ENCODE measurements at regions of chr7 and their contacts with region 1.

Region 1: DNA sequence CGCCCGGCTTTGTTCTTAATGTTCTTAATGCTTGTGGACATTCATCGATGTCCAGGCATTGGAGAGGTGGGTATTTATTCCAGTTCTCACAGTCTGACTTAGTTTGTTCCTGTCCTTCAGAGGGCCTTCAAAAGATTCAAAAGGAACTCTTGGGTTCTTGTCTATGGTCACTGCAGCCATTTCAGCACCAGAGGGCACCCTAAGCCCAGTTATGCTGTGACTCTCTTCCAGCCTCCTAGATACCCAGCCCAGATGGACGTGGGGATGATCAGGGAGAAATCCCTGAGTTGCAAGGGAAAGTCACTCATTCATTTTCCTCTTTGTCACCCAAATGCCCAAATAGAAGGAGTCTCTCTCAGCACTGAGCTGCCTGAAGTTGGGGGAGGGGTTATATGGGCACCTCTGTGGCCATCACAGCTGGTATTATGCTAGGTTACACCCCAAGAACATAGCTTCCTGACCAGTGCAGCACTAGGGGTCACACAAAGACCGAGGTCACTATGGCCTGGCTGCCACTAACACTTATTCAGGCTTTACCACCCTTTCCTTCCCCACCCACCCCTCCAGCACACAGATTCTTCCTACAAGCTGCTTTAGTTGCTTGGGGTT is 26.5 kb upstream of the CCDC126 start:
- DNase-seq: peak; percentile 72 to 78
- H3K4me3 ChIP-seq: no peak overlapping the region
- H3K27ac ChIP-seq: no peak overlapping the region
- H3K4me1 ChIP-seq: no peaks in the 10 kb centered on the region
- H3K27me3 ChIP-seq: no peaks in the 10 kb centered on the region
- CTCF ChIP-seq: peak in 5 of 6 experiments; percentile 60 to 91 (median 88)
- POLR2A ChIP-seq: no peak

Region 2: DNA sequence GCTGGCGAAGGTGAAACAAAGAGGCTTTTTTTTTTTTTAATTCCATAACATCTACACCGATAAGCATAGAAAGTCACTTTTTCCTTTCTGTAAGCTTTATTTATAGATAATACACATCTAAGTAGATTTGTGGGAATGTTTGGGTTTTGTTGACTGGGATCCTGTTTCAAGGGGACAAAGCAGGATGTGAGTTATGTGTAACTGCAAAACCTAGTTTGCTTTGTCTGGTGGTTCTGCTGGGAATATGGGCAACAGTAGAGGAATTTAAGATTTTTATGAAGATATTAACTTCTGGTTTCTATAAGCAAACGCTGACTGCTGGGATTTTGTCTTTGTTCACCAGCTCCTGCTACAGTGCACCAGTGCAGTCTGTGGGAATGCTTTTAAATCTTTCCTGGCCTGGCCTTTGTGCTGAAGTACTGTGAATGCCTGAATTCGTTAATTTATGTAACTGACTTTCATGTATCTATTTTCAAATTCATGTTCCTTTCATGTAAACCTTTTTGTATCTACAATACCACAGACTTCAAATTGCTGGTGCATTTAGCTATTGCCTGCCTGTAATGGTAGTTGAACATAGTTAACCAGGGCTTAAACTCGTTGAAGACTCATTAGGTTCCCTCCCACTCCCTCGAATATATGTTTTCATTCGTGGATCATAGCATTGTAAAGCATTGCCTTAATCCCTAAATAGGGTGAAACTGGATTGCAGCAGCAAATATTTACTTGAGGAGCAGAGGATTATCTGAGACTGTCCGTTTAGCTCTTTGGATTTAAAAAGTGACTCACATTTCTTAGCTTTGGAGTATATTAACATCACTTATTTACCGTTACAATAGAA is 463.7 kb before region 1 on chr7:
- intact Hi-C with region 1: no loop called
- DNase-seq: no peak
- H3K4me3 ChIP-seq: peak overlapping the region in 1 of 3 donors; percentile 97
- H3K27ac ChIP-seq: no peak overlapping the region
- H3K4me1 ChIP-seq: peaks cover 4 to 12% of the 10 kb centered on the region in 2 donors
- H3K27me3 ChIP-seq: no peaks in the 10 kb centered on the region
- CTCF ChIP-seq: no peak
- POLR2A ChIP-seq: no peak

Region 3: GRCh38 chr7:23712368-23713284 is 141.9 kb after region 1 on chr7:
- intact Hi-C with region 1: loop called (anchors 2 kb)
- DNase-seq: no peak
- H3K4me3 ChIP-seq: no peak overlapping the region
- H3K27ac ChIP-seq: no peak overlapping the region
- H3K4me1 ChIP-seq: no peaks in the 10 kb centered on the region
- H3K27me3 ChIP-seq: no peaks in the 10 kb centered on the region
- CTCF ChIP-seq: peak; percentile 22 to 80 (median 50)
- POLR2A ChIP-seq: no peak

Region 4: DNA sequence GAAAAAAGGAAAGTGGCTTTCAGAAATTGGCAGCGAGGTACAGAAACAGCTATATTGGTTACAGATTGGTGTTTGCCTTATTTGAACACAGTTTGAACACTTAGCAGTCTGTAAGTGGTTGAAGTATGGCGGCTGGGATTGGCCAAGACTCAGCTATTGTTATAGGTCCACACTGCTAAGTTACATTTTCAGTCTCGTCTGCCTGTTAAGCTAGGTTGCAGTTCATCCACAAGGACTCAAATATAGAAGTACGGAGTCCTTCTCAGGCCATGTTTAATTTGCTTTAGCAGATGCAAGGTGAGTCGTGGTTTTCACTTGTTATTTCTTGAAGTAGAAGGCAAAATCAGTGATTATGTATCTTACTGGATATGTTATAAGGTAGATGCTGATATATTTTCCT is 212.4 kb after region 1 on chr7:
- intact Hi-C with region 1: no loop called
- DNase-seq: no peak
- H3K4me3 ChIP-seq: no peak overlapping the region
- H3K27ac ChIP-seq: no peak overlapping the region
- H3K4me1 ChIP-seq: no peaks in the 10 kb centered on the region
- H3K27me3 ChIP-seq: no peaks in the 10 kb centered on the region
- CTCF ChIP-seq: no peak
- POLR2A ChIP-seq: no peak

Measured in thyroid gland (tissue), 4 donors.